AG04450 (cell line): ENCODE measurements at regions of chr1 and their contacts with region 1.

Region 1: DNA sequence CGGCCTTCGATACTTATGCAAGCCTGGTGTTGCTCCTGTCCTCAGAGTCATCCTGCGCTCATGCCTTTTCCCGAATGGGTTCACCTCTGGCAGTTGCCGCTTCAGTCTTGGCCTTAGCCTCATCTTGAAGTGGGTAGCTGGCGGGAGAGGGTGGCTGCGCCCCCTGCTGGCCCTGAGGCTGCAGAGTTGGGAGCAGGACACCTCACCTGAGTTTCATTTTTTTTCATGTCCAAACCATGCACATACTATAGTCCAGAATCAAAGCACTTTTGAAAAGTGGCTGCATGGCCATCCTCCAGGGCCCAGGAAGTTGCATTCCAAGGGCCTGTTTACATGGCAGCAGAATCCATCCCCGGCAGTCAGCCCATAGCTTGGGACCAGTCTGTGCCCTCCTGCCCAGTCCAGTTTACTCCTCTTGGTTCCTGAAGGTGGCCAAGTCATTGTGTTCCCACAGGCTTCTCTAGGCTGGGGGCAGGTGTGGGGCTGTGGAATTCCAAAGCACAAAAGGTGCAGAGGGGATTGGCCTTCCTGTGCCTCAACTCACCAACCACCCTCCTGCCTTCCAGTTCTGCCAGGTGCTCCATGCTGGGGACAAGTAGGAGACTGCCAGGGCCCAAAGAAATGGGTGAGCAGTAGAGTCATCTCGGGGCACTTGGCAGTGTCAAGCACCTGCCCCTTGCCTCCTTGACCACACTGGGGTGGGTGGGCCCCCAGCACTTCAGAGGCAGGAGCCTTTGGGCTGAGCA is 44.0 kb downstream of the YARS1 start:
- DNase-seq: peak; percentile 47
- H3K4me3 ChIP-seq: no peak overlapping the region
- H3K27ac ChIP-seq: no peak overlapping the region
- H3K27me3 ChIP-seq: peaks cover 2% of the 10 kb centered on the region
- CTCF ChIP-seq: peak; percentile 97

Region 2: GRCh38 chr1:32761253-32761880 is 11.8 kb before region 1 on chr1:
- CTCF ChIA-PET with region 1: interaction called, 32 read pairs
- POLR2A ChIA-PET with region 1: no interaction called
- DNase-seq: no peak
- H3K4me3 ChIP-seq: no peak overlapping the region
- H3K27ac ChIP-seq: peak overlapping the region; percentile 57
- H3K27me3 ChIP-seq: no peaks in the 10 kb centered on the region
- CTCF ChIP-seq: no peak

Region 3: GRCh38 chr1:32892368-32893197 is 119.4 kb after region 1 on chr1:
- CTCF ChIA-PET with region 1: no interaction called
- POLR2A ChIA-PET with region 1: no interaction called
- DNase-seq: no peak
- H3K4me3 ChIP-seq: peak overlapping the region; percentile 54
- H3K27ac ChIP-seq: no peak overlapping the region
- H3K27me3 ChIP-seq: peaks cover 37% of the 10 kb centered on the region
- CTCF ChIP-seq: peak; percentile 23; the same call in 1 of the 2 replicates